Activated CD4-positive, alpha-beta memory T cell treated with anti-CD3 and anti-CD28 coated beads, Interleukin-2, amount 10 ng/mL, durations not matched to agents 7 days and 5 days (primary cell): ENCODE measurements at regions of chr14 and their contacts with region 1.

Region 1: DNA sequence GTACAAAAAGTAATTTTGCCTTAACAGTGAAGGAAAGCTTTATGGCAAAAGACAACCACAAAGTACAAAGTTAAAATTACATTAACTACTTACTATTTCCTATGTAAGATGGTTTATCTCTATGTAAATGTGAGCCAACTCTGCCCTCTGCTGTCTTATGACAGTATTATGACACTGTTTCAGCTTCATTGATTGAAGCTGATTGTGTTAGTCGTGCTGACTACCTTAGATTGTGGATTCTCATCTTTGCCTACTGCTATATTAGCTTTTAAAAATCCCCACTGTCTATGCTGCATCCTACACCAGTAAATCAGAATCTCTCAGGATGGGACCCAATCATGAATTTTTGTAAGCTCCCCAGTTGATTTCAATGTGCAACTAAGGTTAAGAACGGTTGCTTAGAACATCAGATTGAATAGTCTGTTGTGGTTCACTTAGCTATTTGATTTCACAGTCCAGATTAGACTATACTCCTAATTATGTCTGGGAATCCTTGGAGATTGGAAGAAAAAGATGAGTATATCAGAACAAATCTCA is 12.2 kb upstream of the SPTB start:
- DNase-seq: peak; percentile 32
- H3K4me3 Mint-ChIP-seq: no peak overlapping the region
- H3K27ac Mint-ChIP-seq: no peak overlapping the region
- H3K4me1 Mint-ChIP-seq: no peaks in the 10 kb centered on the region
- H3K27me3 Mint-ChIP-seq: peaks cover 22% of the 10 kb centered on the region

Region 2: GRCh38 chr14:64671591-64671990 is 220.3 kb before region 1 on chr14:
- CTCF ChIA-PET with region 1: interaction called, 47 read pairs
- POLR2A ChIA-PET with region 1: interaction called, 4 read pairs
- DNase-seq: no peak
- H3K4me3 Mint-ChIP-seq: no peak overlapping the region
- H3K27ac Mint-ChIP-seq: peak overlapping the region; percentile 5
- H3K4me1 Mint-ChIP-seq: peaks cover 48% of the 10 kb centered on the region
- H3K27me3 Mint-ChIP-seq: peaks cover 4% of the 10 kb centered on the region

Region 3: DNA sequence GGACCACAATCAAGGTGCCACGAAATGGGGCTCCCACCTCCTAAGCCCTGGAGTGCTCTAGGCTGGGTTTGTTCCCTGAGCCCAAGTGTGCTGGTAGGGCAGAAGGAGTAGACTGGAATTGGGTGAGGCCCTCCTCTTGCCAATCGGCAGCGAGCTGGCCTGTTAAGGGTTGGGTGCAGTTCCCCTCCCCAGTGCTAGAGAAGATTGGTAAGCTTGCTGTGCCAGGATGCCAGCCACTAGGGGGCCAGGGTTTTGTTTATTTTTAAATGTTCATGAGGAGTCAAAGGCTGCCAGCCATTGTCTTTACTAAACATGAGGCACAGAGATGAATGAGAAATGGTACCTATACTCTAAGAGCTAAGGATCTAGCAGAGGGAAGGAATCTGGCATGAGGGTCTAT is 91.9 kb before region 1 on chr14:
- CTCF ChIA-PET with region 1: interaction called, 11 read pairs
- POLR2A ChIA-PET with region 1: interaction called, 3 read pairs
- DNase-seq: peak; percentile 23
- H3K4me3 Mint-ChIP-seq: no peak overlapping the region
- H3K27ac Mint-ChIP-seq: no peak overlapping the region
- H3K4me1 Mint-ChIP-seq: no peaks in the 10 kb centered on the region
- H3K27me3 Mint-ChIP-seq: peaks cover 8% of the 10 kb centered on the region

Region 4: GRCh38 chr14:64880221-64881121 is 11.4 kb before region 1 on chr14:
- CTCF ChIA-PET with region 1: interaction called, 54 read pairs
- POLR2A ChIA-PET with region 1: interaction called, 3 read pairs
- DNase-seq: peak; percentile 63
- H3K4me3 Mint-ChIP-seq: peak overlapping the region; percentile 73
- H3K27ac Mint-ChIP-seq: no peak overlapping the region
- H3K4me1 Mint-ChIP-seq: peaks cover 11% of the 10 kb centered on the region
- H3K27me3 Mint-ChIP-seq: peaks cover 68% of the 10 kb centered on the region